ENCODE measurements at regions of chr9 and their contacts with region 1.

Region 1: GRCh38 chr9:106421772-106422171 is 441.2 kb upstream of the ZNF462 start:
- DNase-seq: no peak
- ATAC-seq: no peak
- H3K4me3 ChIP-seq: no peak overlapping the region
- H3K27ac ChIP-seq: no peak overlapping the region
- H3K4me1 ChIP-seq: no peaks in the 10 kb centered on the region
- H3K27me3 ChIP-seq: peaks cover 7% of the 10 kb centered on the region; the same call in 1 of the 2 replicates
- CTCF ChIP-seq: no peak
- POLR2A ChIP-seq: no peak
- RAD21 ChIP-seq: no peak

Region 2: DNA sequence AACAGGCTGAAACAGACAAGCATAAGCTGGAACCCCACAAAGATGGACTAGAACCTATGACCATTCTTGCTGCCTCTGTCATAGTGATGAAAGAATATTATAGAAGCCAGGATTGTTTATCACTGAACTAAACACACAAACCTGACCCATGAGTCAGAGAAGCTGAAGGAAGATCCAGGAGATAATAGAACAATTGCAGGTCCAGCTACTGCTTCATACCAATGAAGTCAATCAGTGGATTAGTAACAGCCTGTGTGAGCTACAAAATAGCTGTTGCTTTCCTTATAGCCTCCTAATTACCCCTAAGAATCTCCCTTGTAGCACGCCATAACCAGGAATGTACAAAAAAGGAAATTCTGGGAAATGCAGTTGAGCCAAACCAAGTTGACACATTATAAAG is 18.7 kb before region 1 on chr9:
- CTCF ChIA-PET with region 1: no interaction called
- POLR2A ChIA-PET with region 1: no interaction called
- RAD21 ChIA-PET with region 1: no interaction called
- intact Hi-C with region 1: loop called (anchors 2 kb)
- DNase-seq: no peak
- ATAC-seq: no peak
- H3K4me3 ChIP-seq: no peak overlapping the region
- H3K27ac ChIP-seq: no peak overlapping the region
- H3K4me1 ChIP-seq: no peaks in the 10 kb centered on the region
- H3K27me3 ChIP-seq: 0 out of 2 replicates have a peak, but pooled peaks cover 4% of the 10 kb centered on the region
- CTCF ChIP-seq: no peak
- POLR2A ChIP-seq: no peak
- RAD21 ChIP-seq: no peak

Region 3: DNA sequence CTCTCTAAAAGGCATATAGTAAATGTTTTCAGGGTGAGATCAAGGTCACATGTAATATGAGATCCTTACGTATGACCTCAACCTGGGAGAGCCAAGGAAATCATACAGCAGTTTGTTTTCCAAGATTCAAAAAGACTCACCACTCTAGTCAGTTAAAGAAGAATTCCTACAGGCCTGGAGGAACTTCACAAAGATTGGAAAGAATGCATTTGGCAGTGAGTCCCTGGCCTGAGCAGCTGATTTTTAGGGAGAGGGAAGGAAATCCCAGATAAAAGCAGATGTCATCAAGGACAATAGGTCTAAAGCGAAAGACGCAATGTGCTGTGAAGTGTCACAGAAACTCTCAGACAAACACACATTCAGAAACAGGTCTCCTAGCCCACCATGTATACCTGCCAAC is 17.2 kb after region 1 on chr9:
- CTCF ChIA-PET with region 1: no interaction called
- POLR2A ChIA-PET with region 1: no interaction called
- RAD21 ChIA-PET with region 1: no interaction called
- intact Hi-C with region 1: no loop called
- DNase-seq: no peak
- ATAC-seq: no peak
- H3K4me3 ChIP-seq: no peak overlapping the region
- H3K27ac ChIP-seq: no peak overlapping the region
- H3K4me1 ChIP-seq: no peaks in the 10 kb centered on the region
- H3K27me3 ChIP-seq: peaks cover 14% of the 10 kb centered on the region
- CTCF ChIP-seq: no peak
- POLR2A ChIP-seq: no peak
- RAD21 ChIP-seq: no peak

Region 4: DNA sequence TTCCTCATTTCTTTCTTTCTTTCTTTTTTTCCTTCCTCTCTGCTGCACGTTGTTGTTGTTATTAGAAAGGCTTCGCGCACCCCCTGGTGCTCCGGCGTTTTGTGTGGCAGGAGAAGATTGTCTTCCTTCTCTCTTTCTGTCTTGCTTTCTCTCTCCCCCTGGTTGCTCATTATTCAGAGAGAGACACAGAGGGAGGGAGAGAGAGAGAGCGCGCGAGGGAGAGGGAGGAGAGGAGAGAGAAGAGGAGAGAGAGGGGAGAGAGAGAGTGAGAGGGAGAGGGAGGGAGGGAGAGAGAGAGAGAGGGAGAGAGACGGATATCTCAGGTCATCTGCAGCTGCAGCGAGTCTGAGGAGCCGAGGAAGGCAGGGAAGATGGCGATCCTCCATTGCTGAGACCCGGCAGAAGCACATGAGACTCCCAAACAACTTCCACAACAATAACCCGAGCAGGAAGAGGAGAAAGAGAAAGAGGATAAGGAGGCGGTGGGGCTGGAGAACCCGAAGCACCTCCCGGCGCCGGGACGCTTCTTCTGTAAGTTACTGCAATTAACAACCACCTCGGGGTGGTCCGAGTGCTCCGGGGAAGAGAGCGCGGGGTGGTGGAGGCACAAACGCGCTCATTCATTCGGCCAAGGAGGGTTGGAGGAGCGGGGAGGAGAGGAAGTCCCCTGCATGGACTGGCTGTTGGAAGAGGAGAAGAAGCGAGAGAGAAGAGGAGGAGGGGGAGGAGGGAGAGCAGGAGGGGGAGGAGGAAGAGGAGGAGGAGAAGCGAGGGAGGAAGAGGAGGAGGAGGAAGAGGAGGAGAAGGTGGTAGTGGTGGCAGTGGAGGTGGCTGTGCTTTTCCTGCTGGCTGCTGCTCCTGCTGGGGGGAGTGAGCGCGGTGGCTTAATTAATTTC is 441.3 kb after region 1 on chr9 and contains the start of gene ZNF462:
- CTCF ChIA-PET with region 1: no interaction called
- POLR2A ChIA-PET with region 1: no interaction called
- RAD21 ChIA-PET with region 1: no interaction called
- intact Hi-C with region 1: no loop called
- DNase-seq: no peak
- ATAC-seq: peak; percentile 21
- H3K4me3 ChIP-seq: peak within 1 kb of the TSS; percentile 49 to 56
- H3K27ac ChIP-seq: peak within 1 kb of the TSS; percentile 29
- H3K4me1 ChIP-seq: peaks cover 5 to 16% of the 10 kb centered on the region in 2 experiments; a peak in 3 of 4 replicates
- H3K27me3 ChIP-seq: no peaks in the 10 kb centered on the region
- CTCF ChIP-seq: 0 out of 6 replicates have a peak, but pooled peaks of 1 of the 3 experiments have one; percentile 4
- POLR2A ChIP-seq: no peak
- RAD21 ChIP-seq: peak; percentile 28; the same call in 1 of the 2 replicates
- total RNA-seq, gene ZNF462: 18.1 TPM